K562 (cell line): ENCODE measurements at regions of chr6 and their contacts with region 1.

Region 1: GRCh38 chr6:57316581-57317059 is 810 bp upstream of the PRIM2 start:
- DNase-seq: peak; percentile 74 to 94 (median 75)
- ATAC-seq: peak; percentile 90
- H3K4me3 ChIP-seq: peak overlapping the region; percentile 74
- H3K27ac ChIP-seq: peak overlapping the region; percentile 80
- H3K4me1 ChIP-seq: peaks cover 0 to 2% of the 10 kb centered on the region in 2 experiments; a peak in 2 of 5 replicates
- H3K27me3 ChIP-seq: no peaks in the 10 kb centered on the region
- CTCF ChIP-seq: peak; percentile 89 to 98 (median 92)
- EP300 ChIP-seq: no peak
- POLR2A ChIP-seq: no peak
- RAD21 ChIP-seq: peak; percentile 95 to 97

Region 2: DNA sequence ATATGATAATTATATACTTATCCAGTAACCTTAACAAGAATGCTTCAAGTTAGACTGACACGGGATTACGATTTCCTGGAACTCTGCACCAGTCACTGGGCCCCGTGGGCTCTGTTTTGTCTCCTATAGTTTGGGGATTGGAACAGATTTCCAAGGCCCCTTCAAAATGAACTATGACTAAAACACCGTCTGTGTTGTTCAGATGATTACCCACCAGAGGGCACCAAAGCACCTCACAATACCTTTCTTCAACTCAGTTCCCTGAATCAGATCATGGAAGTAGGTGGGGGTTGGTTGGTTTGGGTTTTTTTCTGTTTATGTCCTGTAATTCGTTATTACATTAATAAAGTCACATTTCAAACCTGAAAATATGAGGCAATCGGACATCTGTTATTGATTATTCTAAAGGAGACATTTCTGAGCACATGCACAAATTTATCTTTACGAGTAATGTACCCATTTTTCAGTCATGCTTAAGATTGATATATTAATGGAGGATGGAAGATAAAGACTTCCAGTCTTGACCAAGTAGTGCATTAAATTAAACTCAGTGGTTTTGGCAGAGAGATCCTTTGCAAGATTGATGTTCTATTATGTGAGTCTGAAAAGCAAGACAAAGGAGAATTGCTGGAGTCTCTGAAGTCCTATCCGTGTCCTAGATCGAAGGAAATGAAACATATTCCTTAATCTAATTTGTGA is 957.3 kb before region 1 on chr6:
- CTCF ChIA-PET with region 1: no interaction called
- POLR2A ChIA-PET with region 1: no interaction called
- in situ Hi-C with region 1: loop called (anchors 25 kb)
- intact Hi-C with region 1: loop called (anchors 10 kb)
- DNase-seq: peak; percentile 63 to 75 (median 67)
- ATAC-seq: peak; percentile 93
- H3K4me3 ChIP-seq: no peak overlapping the region
- H3K27ac ChIP-seq: no peak overlapping the region
- H3K4me1 ChIP-seq: no peaks in the 10 kb centered on the region
- H3K27me3 ChIP-seq: no peaks in the 10 kb centered on the region; a peak in 2 of 5 replicates
- CTCF ChIP-seq: peak; percentile 65 to 84 (median 76)
- EP300 ChIP-seq: no peak
- POLR2A ChIP-seq: no peak
- RAD21 ChIP-seq: peak; percentile 93 to 96

Region 3: DNA sequence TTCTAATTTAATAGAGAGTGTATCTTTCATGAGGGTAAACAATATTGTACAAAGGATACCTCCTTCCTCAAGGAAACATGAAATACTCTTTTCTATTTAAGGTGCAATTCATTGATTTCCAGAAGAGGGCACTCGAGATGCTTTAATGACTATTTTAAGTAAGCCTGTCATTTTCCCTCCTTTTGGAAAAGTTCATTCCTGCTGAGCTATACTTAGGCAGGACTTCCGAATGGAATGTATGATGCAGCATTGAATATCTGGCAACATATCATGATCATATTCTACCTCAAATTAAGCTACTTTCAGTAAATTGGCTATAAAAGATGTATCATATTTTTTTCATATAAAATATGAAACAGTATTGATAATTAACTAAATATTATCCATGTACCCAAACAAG is 679.0 kb before region 1 on chr6:
- CTCF ChIA-PET with region 1: no interaction called
- POLR2A ChIA-PET with region 1: no interaction called
- in situ Hi-C with region 1: no loop called
- intact Hi-C with region 1: loop called (anchors 10 kb)
- DNase-seq: peak in 2 of 4 experiments; percentile 9 to 55
- ATAC-seq: peak; percentile 61
- H3K4me3 ChIP-seq: no peak overlapping the region
- H3K27ac ChIP-seq: no peak overlapping the region
- H3K4me1 ChIP-seq: no peaks in the 10 kb centered on the region
- H3K27me3 ChIP-seq: no peaks in the 10 kb centered on the region
- CTCF ChIP-seq: peak; percentile 51 to 78 (median 54); a peak in 5 of 6 replicates
- EP300 ChIP-seq: no peak
- POLR2A ChIP-seq: no peak
- RAD21 ChIP-seq: peak; percentile 83 to 92

Region 4: DNA sequence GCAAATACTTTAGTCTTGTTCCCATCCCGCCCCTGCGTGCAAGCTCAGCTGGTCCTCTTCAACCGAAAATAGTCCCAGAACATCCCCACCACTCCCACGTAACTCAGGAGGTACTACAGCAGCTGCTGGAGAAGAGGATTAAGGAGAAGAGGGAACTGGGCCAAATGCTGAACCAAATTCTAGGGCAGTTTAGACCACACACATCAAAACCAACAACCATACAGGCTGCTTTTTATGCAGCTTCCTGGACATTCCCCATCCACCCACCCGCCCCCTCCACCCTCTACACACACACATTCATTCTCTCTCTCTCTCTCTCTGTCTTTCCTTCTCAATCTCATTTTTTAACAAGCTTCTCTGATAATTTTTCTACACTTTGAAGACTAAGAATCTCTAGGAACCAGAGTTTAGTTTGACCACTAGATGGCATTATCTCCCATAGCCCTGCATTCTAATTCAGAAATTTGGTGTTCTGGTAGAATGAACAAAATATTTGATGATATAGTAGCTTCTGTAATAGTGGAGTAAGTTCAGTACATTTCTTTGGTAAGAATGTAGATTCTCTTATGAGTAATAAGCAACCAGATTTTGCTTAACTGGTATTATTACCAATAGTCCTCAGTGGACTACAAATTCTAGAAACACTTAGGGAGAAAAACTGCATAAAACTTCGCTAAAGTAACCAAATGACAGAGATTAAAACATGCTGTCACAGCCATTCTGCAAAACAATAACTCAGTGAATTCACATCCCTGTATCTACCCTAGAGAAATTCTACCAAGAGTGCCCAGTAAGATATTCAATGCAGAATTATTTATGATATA is 413.8 kb before region 1 on chr6:
- CTCF ChIA-PET with region 1: interaction called, 34 read pairs
- POLR2A ChIA-PET with region 1: interaction called, 3 read pairs
- in situ Hi-C with region 1: loop called (anchors 5 kb)
- intact Hi-C with region 1: loop called (anchors 1 kb)
- DNase-seq: peak; percentile 24 to 47 (median 35)
- ATAC-seq: peak; percentile 70
- H3K4me3 ChIP-seq: no peak overlapping the region
- H3K27ac ChIP-seq: no peak overlapping the region
- H3K4me1 ChIP-seq: peaks cover 0 to 4% of the 10 kb centered on the region in 2 experiments; a peak in 2 of 5 replicates
- H3K27me3 ChIP-seq: no peaks in the 10 kb centered on the region
- CTCF ChIP-seq: peak in 2 of 3 experiments; percentile 53 to 81; a peak in 4 of 6 replicates
- EP300 ChIP-seq: no peak
- POLR2A ChIP-seq: no peak
- RAD21 ChIP-seq: peak; percentile 56 to 73

Region 5: GRCh38 chr6:56955171-56956045 is 361.2 kb before region 1 on chr6:
- CTCF ChIA-PET with region 1: no interaction called
- POLR2A ChIA-PET with region 1: interaction called, 3 read pairs
- in situ Hi-C with region 1: no loop called
- intact Hi-C with region 1: loop called (anchors 1 kb)
- DNase-seq: peak; percentile 86 to 95 (median 87)
- ATAC-seq: peak; percentile 90
- H3K4me3 ChIP-seq: peak overlapping the region; percentile 69
- H3K27ac ChIP-seq: peak overlapping the region; percentile 72
- H3K4me1 ChIP-seq: peaks cover 13 to 20% of the 10 kb centered on the region in 2 experiments; a peak in 4 of 5 replicates
- H3K27me3 ChIP-seq: no peaks in the 10 kb centered on the region
- CTCF ChIP-seq: peak; percentile 87 to 96 (median 96)
- EP300 ChIP-seq: no peak; the same call in 1 of the 2 replicates
- POLR2A ChIP-seq: peak; percentile 51; the same call in 1 of the 2 replicates
- RAD21 ChIP-seq: peak; percentile 80 to 82

Region 6: DNA sequence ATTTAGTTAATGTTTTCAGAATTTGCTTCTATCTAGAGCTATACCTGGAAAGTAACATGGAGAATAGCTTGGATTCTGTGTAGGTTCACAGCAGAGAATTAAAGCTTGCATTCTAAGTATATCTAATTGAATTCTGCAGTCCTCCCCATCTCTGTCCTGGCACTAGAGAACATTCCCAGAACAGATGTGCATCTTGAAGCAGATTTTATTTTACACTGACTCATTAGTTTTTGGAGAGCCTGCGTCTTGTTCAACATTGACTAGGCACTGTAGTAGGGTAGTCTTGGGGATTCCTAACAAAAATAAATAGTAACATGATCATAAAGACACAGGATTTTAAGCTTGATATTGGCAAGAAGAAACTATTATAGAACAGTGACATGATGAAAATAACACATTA is 180.7 kb before region 1 on chr6:
- CTCF ChIA-PET with region 1: no interaction called
- POLR2A ChIA-PET with region 1: no interaction called
- in situ Hi-C with region 1: no loop called
- intact Hi-C with region 1: no loop called
- DNase-seq: no peak
- ATAC-seq: no peak
- H3K4me3 ChIP-seq: no peak overlapping the region
- H3K27ac ChIP-seq: no peak overlapping the region
- H3K4me1 ChIP-seq: no peaks in the 10 kb centered on the region
- H3K27me3 ChIP-seq: no peaks in the 10 kb centered on the region
- CTCF ChIP-seq: no peak
- EP300 ChIP-seq: no peak
- POLR2A ChIP-seq: no peak
- RAD21 ChIP-seq: no peak

Region 7: GRCh38 chr6:57182017-57182432 is 134.6 kb before region 1 on chr6:
- CTCF ChIA-PET with region 1: no interaction called
- POLR2A ChIA-PET with region 1: no interaction called
- in situ Hi-C with region 1: loop called (anchors 10 kb)
- intact Hi-C with region 1: no loop called
- DNase-seq: peak in 1 of 4 experiments; percentile 32
- ATAC-seq: peak; percentile 30; the same call in 2 of the 3 replicates
- H3K4me3 ChIP-seq: no peak overlapping the region
- H3K27ac ChIP-seq: no peak overlapping the region
- H3K4me1 ChIP-seq: no peaks in the 10 kb centered on the region; a peak in 2 of 5 replicates
- H3K27me3 ChIP-seq: no peaks in the 10 kb centered on the region
- CTCF ChIP-seq: no peak
- EP300 ChIP-seq: no peak
- POLR2A ChIP-seq: no peak
- RAD21 ChIP-seq: no peak

Region 8: DNA sequence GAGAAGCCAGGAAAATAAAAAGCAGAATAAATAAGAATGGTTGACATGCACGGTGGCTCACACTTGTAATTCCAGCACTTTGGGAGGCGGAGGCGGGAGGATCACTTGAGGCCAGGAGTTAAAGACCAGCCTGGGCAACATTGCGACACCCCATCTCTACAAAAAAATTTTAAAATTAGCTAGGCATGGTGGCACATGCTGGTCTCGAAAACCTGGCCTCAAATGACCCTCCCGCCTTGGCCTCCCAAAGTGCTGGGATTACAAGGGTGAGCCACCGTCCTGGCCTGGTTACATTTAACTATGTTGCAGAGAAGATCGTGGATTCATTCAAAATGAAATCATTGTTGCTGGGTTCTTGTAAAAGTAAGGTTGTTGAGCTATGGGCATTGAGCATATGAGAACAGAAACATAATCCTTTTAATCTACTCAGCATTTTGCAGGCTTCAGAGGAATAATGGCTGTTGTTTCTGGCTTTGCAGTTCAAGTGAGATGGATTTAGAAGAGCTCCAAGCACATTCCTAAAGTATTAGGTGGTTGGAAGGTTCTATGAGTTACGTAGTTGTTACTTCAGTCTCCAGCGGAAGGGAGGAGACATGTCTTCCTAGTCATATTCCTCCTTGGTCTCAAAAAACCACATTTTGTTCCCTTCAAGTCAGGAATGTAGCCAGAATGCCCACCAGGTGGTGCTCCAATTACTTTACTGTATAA is 48.9 kb before region 1 on chr6:
- CTCF ChIA-PET with region 1: interaction called, 4 read pairs
- POLR2A ChIA-PET with region 1: no interaction called
- in situ Hi-C with region 1: no loop called
- intact Hi-C with region 1: loop called (anchors 1 kb)
- DNase-seq: peak; percentile 37 to 69 (median 47)
- ATAC-seq: peak; percentile 93
- H3K4me3 ChIP-seq: no peak overlapping the region
- H3K27ac ChIP-seq: no peak overlapping the region
- H3K4me1 ChIP-seq: no peaks in the 10 kb centered on the region
- H3K27me3 ChIP-seq: peaks cover 0 to 2% of the 10 kb centered on the region in 2 experiments; a peak in 1 of 5 replicates
- CTCF ChIP-seq: peak; percentile 47 to 65 (median 62); a peak in 5 of 6 replicates
- EP300 ChIP-seq: no peak
- POLR2A ChIP-seq: no peak
- RAD21 ChIP-seq: peak in 1 of 2 experiments; percentile 69; a peak in 2 of 4 replicates

Region 9: GRCh38 chr6:57303931-57304681 is 12.5 kb before region 1 on chr6:
- CTCF ChIA-PET with region 1: no interaction called
- POLR2A ChIA-PET with region 1: no interaction called
- in situ Hi-C with region 1: no loop called
- intact Hi-C with region 1: no loop called
- DNase-seq: no peak
- ATAC-seq: no peak
- H3K4me3 ChIP-seq: no peak overlapping the region
- H3K27ac ChIP-seq: no peak overlapping the region
- H3K4me1 ChIP-seq: no peaks in the 10 kb centered on the region
- H3K27me3 ChIP-seq: peaks cover 12 to 13% of the 10 kb centered on the region in 2 experiments; a peak in 4 of 5 replicates
- CTCF ChIP-seq: no peak
- EP300 ChIP-seq: no peak
- POLR2A ChIP-seq: no peak
- RAD21 ChIP-seq: no peak